Uterus (tissue), 4 donors: ENCODE measurements at regions of chr22 and their contacts with region 1.

Region 1: GRCh38 chr22:31891366-31892079 is 52.8 kb upstream of the YWHAH start:
- DNase-seq: no peak
- H3K4me3 ChIP-seq: no peak overlapping the region
- H3K27ac ChIP-seq: no peak overlapping the region
- H3K4me1 ChIP-seq: no peaks in the 10 kb centered on the region
- H3K27me3 ChIP-seq: no peaks in the 10 kb centered on the region
- CTCF ChIP-seq: no peak
- POLR2A ChIP-seq: no peak

Region 2: GRCh38 chr22:31829505-31829904 is 62.0 kb before region 1 on chr22:
- intact Hi-C with region 1: no loop called
- DNase-seq: peak in 1 of 2 donors; percentile 22
- H3K4me3 ChIP-seq: no peak overlapping the region
- H3K27ac ChIP-seq: peak overlapping the region in 1 of 2 donors; percentile 23
- H3K4me1 ChIP-seq: no peaks in the 10 kb centered on the region
- H3K27me3 ChIP-seq: no peaks in the 10 kb centered on the region
- CTCF ChIP-seq: no peak
- POLR2A ChIP-seq: no peak

Region 3: DNA sequence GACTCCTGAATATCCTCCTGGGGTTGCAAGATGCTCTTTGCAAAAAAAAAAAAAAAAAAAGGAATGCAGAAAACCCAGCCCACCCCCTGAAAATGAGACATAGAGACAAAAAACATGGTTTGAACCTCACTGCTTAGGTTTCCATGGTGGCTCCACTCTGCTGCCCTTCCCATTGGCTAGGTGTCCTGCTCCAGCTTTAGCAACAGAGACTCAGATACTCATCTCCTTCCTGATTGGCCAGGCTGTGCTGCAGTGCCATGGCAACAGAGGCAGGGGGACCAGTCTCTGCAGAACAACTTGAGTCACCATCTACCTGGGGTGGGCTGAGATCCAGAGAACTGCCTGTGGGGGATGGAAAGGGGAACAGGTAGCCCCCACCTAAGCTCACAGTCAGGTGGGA is 35.4 kb after region 1 on chr22:
- intact Hi-C with region 1: no loop called
- DNase-seq: no peak
- H3K4me3 ChIP-seq: no peak overlapping the region
- H3K27ac ChIP-seq: no peak overlapping the region
- H3K4me1 ChIP-seq: no peaks in the 10 kb centered on the region
- H3K27me3 ChIP-seq: no peaks in the 10 kb centered on the region
- CTCF ChIP-seq: no peak
- POLR2A ChIP-seq: no peak

Region 4: GRCh38 chr22:31952459-31952858 is 60.9 kb after region 1 on chr22:
- intact Hi-C with region 1: loop called (anchors 10 kb)
- DNase-seq: peak in 1 of 2 donors; percentile 42
- H3K4me3 ChIP-seq: no peak overlapping the region
- H3K27ac ChIP-seq: peak overlapping the region; percentile 39 to 58
- H3K4me1 ChIP-seq: peaks cover 14 to 22% of the 10 kb centered on the region in 2 donors
- H3K27me3 ChIP-seq: no peaks in the 10 kb centered on the region
- CTCF ChIP-seq: no peak
- POLR2A ChIP-seq: no peak